Lower leg skin (tissue), 4 donors: ENCODE measurements at regions of chr20 and their contacts with region 1.

Region 1: GRCh38 chr20:22691369-22692118 is 107.2 kb upstream of the FOXA2 start:
- DNase-seq: peak; percentile 57 to 94
- H3K4me3 ChIP-seq: no peak overlapping the region
- CTCF ChIP-seq: peak in 1 of 3 donors; percentile 56
- POLR2A ChIP-seq: no peak

Region 2: GRCh38 chr20:22475662-22476061 is 215.9 kb before region 1 on chr20:
- intact Hi-C with region 1: no loop called
- DNase-seq: no peak
- H3K4me3 ChIP-seq: no peak overlapping the region
- CTCF ChIP-seq: no peak
- POLR2A ChIP-seq: no peak

Region 3: DNA sequence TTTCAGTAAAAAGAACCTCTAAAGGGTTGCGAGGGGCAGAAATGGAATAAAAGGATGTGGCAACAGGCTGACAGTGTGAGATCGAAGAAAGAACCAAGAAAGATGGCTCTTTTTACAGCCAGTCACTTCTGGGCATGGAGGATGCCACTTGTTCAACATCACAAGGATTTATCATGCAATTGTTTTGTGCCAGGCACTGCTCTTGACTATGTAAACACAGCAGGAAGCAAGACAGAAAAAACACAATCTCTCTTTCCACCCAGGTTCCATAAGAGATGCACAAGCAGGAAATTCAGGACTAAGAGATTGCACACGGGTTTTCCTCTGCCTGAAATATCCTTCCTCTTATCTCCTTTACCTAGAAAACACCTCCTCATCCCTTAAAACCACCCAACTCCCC is 145.2 kb before region 1 on chr20:
- intact Hi-C with region 1: no loop called
- DNase-seq: no peak
- H3K4me3 ChIP-seq: no peak overlapping the region
- CTCF ChIP-seq: no peak
- POLR2A ChIP-seq: no peak

Region 4: DNA sequence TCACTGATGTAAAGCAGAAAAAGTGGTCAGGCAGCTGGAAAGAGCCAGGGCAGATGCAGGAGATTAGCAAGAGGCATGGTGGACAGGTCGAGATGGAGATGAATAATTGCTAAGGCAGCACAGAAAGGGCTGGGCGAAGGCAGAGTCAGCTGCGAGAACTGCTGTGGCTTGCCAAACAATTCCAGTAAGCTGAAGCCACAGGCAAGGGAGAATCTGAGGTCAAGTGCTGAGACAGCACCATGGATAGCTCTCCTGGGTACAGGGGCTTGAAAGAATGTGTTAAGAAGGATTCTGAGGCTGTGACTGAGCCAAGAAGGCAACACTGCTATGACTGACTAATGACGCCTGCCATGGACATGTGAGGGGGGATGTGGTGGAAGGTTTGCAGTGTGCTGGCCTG is 113.7 kb after region 1 on chr20:
- intact Hi-C with region 1: no loop called
- DNase-seq: peak in 1 of 2 donors; percentile 67
- H3K4me3 ChIP-seq: no peak overlapping the region
- CTCF ChIP-seq: no peak
- POLR2A ChIP-seq: no peak

Region 5: GRCh38 chr20:23200918-23201317 is 509.4 kb after region 1 on chr20:
- intact Hi-C with region 1: loop called (anchors 5 kb)
- DNase-seq: peak in 1 of 2 donors; percentile 85
- H3K4me3 ChIP-seq: no peak overlapping the region
- CTCF ChIP-seq: no peak
- POLR2A ChIP-seq: no peak

Region 6: GRCh38 chr20:23340524-23340923 is 649.0 kb after region 1 on chr20:
- intact Hi-C with region 1: loop called (anchors 5 kb)
- DNase-seq: peak; percentile 69 to 92
- H3K4me3 ChIP-seq: no peak overlapping the region
- CTCF ChIP-seq: peak in 1 of 3 donors; percentile 46
- POLR2A ChIP-seq: no peak